KBM-7 (cell line): ENCODE measurements at regions of chr18 and their contacts with region 1.

Region 1: GRCh38 chr18:12657684-12658425 is at the start of gene SPIRE1:
- DNase-seq: peak; percentile 51

Region 2: DNA sequence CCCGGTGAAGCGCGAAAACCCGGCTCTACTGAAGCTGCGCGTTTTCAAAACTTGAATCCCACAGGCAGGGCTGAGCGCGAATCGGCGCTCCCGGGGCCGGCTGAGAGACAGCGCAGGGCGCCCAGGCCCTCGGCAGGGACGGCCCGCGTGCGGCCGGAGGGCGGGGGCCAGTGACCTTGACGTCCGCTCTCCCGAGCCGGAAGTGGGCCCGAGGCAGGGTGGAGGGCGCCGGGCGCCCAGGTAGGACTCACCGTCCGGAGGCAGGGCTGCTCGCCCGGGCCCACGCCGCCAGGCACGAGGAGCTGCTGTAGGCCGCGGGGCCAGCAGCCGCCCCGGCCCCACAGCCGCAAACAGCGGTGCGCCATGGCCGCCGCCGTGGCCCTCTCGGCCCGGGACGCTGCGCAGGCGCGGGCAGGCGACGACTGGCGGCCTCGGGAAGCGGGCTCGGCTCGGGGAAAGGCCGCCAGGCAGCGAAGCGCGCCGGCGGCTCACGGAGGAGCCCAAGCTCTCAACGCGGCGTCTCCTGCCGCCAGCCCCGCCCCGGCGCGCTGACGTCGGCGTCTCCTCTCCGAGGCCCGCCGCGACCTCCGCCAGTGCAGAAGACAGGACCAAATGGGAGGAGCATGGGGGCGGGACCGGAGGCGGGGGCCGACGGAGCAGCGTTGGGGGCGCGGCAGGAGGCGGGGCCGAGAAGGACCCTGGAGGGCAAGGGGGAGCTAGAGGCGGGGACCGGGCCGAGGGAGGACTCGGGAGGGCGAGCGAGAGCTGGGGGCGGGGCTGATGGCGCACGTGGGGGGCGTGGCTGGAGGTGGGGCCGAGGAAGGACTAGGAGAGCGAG is 280.9 kb before region 1 on chr18 and contains the start of gene AFG3L2:
- in situ Hi-C with region 1: loop called (anchors 25 kb)
- DNase-seq: peak; percentile 96

Region 3: DNA sequence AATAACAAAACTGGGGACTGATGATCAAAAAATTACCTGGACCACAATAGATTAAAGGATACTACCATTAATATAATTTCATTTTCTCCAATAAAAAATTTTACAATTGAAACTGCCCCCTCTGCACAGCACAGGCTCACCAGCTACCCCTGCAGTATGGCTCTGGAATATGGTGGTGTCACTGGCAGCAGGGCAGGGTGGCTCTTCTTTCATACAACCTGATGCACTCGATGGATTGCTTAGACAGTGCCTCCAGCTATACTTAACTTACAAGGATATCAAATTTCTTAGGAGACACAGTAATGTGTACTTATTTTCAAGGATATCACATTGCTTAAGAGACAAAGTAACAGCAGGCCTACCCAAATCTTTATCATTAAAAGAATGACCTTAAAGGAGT is 126.1 kb before region 1 on chr18:
- in situ Hi-C with region 1: loop called (anchors 25 kb)
- DNase-seq: no peak

Region 4: DNA sequence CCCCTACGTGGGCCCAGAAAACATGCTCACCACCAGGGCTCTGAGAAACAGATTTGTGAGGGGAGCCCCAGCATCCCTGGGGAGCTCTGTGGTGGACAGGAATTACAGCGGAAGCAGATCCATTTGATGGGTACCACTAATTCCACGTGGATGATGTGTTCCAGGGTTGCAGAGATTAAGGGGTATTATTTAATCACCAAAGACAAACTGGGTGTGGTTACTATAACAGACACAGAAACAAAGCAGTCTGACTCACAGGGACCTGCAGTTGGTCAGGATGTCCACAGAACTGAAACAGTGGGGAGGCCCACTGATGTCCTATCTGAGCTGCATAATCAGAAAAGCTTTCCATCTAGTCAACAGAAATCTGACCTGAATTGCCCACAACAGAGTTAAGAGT is 110.8 kb after region 1 on chr18:
- in situ Hi-C with region 1: no loop called
- DNase-seq: no peak